GM13977 (cell line): ENCODE measurements at regions of chr2 and their contacts with region 1.

Region 1: DNA sequence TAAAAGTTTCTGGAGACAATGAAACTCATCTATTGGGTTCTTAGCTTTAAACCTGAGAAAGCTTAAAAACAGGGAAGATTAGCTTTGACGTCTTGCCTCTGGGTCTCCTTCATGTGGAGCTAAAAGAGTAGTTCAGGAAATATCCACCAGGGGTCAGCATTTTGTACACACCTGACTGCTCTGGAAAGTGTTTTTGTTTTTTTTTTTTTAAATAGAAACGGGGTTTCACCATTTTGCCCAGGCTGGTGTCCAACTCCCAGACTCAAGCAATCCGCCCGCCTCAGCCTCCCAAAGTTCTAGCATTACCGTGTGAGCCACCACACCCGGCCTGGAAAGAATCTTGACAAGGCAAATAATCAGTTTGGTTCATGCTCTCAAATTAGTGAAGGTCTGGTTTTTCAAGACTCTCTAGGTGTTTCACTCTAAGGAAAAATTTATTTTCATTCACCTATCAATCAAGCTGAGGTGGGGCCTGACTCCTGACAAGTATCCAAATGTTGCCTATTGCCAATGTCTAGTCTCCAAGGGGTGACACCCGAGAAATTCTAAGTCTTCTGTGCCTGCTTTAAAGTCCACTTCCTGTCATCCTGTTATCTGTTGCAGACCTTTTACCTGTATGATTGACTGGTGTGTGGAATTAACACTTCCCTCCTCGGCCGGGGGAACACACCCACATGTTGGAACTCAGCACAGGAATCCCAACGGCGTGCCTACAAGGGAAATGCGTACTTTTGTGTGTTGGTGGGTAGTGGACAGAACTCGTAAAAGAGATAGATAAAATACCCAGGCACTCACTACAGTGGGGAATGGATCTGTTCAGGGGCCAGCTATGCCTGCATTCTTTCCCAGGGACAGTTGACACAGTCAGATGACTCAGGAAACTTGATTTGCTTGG is 11.3 kb downstream of the IL1RN start:
- DNase-seq: peak; percentile 70
- CTCF ChIP-seq: peak; percentile 67

Region 2: DNA sequence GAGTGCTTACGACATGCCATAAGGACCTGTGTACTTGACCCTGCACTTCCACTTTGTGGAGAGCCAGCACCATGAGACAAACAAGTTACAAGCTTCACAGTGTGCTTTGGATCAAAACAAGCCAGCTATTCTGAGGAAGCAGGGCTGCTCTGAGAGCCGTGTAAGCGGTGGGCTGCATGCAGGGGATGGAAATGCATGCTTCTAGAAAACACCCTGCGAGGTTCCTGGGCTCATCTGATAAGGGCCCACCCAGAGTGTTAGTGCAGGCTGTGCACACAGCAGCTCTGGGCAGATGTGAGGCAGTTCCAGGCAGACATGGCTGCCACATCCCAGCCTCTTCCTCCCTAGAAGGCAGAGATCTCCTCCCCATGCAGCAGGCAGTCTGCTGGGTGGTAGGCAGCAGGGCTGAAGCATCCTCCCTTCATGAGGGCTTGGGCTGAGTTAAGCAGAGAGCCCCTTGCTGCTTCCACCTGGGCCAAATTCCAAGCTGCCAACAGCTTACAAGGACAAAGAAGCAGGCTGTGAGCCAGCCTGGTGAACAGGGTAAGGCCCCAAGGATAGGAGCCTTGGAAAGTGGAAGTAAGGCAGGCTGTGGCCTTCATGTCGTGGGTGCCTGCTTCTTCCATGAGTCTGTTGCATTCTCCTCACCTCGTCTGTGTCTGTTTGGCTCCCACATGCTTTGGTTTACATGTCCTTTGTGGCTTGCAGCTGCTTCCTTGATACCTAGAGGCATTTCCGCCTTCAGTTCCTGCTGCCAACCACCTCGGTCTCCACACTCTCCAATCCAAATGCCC is 42.8 kb after region 1 on chr2:
- in situ Hi-C with region 1: loop called (anchors 5 kb)
- DNase-seq: no peak
- CTCF ChIP-seq: no peak

Region 3: GRCh38 chr2:113370478-113371091 is 231.9 kb after region 1 on chr2:
- in situ Hi-C with region 1: loop called (anchors 10 kb)
- DNase-seq: peak; percentile 51
- CTCF ChIP-seq: peak; percentile 61